Activated CD8-positive, alpha-beta T cell treated with anti-CD3 and anti-CD28 coated beads, Interleukin-2, amount 10 ng/mL, durations not matched to agents 7 days and 5 days (primary cell): ENCODE measurements at regions of chr11 and their contacts with region 1.

Region 1: GRCh38 chr11:102495161-102496042 is 35.1 kb downstream of the MMP7 start:
- DNase-seq: peak; percentile 68
- ATAC-seq: peak; percentile 78
- H3K4me3 Mint-ChIP-seq: no peak overlapping the region
- H3K27ac Mint-ChIP-seq: peak overlapping the region; percentile 9
- H3K4me1 Mint-ChIP-seq: peaks cover 27% of the 10 kb centered on the region
- H3K27me3 Mint-ChIP-seq: peaks cover 14% of the 10 kb centered on the region

Region 2: GRCh38 chr11:102346748-102347461 is 148.5 kb before region 1 on chr11 and contains the start of gene BIRC2:
- CTCF ChIA-PET with region 1: interaction called, 48 read pairs
- POLR2A ChIA-PET with region 1: interaction called, 6 read pairs
- DNase-seq: peak; percentile 95
- ATAC-seq: peak; percentile 95
- H3K4me3 Mint-ChIP-seq: peak within 1 kb of the TSS; percentile 97
- H3K27ac Mint-ChIP-seq: peak within 1 kb of the TSS; percentile 98
- H3K4me1 Mint-ChIP-seq: peaks cover 35% of the 10 kb centered on the region
- H3K27me3 Mint-ChIP-seq: no peaks in the 10 kb centered on the region
- total RNA-seq, gene BIRC2: 28.3 to 30.4 TPM

Region 3: DNA sequence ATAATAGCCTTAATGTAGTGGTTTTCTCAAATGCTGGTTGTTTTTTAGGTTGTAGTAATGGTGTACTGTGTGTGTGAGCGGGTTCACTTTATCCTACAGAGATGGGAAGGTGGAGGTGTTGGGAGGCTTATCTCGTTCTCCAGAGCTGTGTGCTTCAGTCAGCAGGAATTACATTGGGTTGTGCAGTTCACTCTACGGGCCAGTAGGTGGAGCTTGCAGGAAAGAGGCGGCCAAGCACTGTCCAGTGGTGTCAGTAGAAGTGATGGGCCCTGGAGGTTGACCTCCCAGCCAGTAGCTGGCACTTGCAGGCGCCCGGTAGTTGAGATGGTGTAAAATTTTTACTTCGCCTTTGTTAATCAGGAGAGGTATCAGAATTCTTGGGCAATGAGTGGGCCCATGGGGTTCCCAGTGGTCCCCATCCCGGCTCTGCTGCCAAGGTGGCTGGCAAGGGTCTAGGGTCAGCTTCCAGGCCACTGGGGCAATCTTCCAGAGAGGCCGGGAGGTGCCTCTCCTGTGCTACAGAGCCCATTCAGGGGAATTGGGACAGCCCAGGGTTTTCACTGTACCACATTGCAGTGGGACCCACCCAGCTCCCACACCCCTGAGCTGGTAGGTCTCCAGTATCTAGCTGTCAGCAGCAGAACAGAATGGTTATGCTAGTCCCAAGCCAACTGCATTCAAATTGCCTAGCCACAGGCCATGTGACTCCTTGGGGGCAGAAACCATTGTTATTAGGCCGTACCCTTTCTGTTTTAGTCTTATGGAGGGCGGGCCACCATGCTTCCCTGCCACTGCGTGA is 104.5 kb before region 1 on chr11:
- CTCF ChIA-PET with region 1: interaction called, 56 read pairs
- POLR2A ChIA-PET with region 1: interaction called, 3 read pairs
- DNase-seq: peak; percentile 64
- ATAC-seq: peak; percentile 70
- H3K4me3 Mint-ChIP-seq: no peak overlapping the region
- H3K27ac Mint-ChIP-seq: no peak overlapping the region
- H3K4me1 Mint-ChIP-seq: peaks cover 26% of the 10 kb centered on the region
- H3K27me3 Mint-ChIP-seq: no peaks in the 10 kb centered on the region

Region 4: DNA sequence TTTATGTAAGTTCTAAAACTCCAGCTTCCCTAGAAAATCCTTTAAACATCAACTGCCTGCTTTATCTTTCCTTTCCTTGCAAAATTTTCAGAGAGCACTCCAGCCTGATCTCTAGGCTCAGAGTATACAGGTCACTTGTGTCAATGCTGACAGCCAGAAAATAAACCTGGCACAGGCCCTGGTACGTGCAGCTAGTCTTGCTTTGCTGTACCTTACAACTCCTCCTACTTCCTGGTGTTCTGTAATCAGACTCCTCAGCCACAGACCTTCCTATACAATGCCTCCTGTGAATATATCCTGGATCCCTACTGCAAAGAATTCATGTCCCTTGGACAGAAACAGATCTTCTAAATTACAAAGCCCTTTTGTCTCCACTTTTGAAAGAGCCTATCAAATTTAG is 18.6 kb before region 1 on chr11:
- CTCF ChIA-PET with region 1: interaction called, 15 read pairs
- POLR2A ChIA-PET with region 1: no interaction called
- DNase-seq: peak; percentile 69
- ATAC-seq: peak; percentile 97
- H3K4me3 Mint-ChIP-seq: peak overlapping the region; percentile 12
- H3K27ac Mint-ChIP-seq: peak overlapping the region; percentile 90
- H3K4me1 Mint-ChIP-seq: peaks cover 57% of the 10 kb centered on the region
- H3K27me3 Mint-ChIP-seq: no peaks in the 10 kb centered on the region

Region 5: DNA sequence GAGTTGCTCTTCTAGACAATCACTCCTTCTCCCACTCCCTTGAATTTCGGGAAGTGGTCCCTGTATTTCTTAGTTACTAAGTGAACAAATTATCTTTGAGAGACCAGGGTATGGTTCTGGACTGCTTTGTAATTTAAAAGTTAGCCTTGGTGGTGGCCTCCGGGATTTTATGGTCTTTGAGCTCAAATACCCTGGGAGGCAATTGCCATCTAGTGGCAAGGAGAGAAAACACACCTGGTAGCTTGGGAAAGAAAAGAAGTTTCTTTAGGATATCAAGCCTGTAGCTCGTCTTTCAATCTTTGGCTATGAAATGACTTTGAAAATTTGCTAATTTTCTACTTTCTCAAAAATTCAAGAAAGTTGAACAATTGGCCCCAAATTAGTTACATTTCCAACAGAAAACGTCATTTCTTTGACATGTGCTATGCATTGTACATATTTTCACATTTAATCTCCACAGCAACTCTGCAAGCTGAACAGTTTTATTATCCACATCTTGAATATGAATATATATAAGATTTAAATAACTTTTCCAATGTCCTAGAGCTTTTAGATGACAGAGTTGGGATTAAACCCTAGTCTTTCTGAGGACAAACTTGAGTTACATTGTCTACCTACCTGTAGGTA is 171.0 kb after region 1 on chr11:
- CTCF ChIA-PET with region 1: interaction called, 25 read pairs
- POLR2A ChIA-PET with region 1: no interaction called
- DNase-seq: peak; percentile 38
- ATAC-seq: peak; percentile 36
- H3K4me3 Mint-ChIP-seq: no peak overlapping the region
- H3K27ac Mint-ChIP-seq: no peak overlapping the region
- H3K4me1 Mint-ChIP-seq: no peaks in the 10 kb centered on the region
- H3K27me3 Mint-ChIP-seq: peaks cover 19% of the 10 kb centered on the region